IMR-90 (cell line): ENCODE measurements at regions of chr4 and their contacts with region 1.

Region 1: GRCh38 chr4:101347557-101348366 is 436 bp upstream of the PPP3CA start:
- DNase-seq: peak; percentile 95
- ATAC-seq: peak; percentile 90
- H3K4me3 ChIP-seq: peak overlapping the region; percentile 94
- H3K27ac ChIP-seq: peak overlapping the region; percentile 95
- H3K4me1 ChIP-seq: peaks cover 8% of the 10 kb centered on the region
- H3K27me3 ChIP-seq: no peaks in the 10 kb centered on the region
- CTCF ChIP-seq: 0 out of 2 replicates have a peak, but pooled peaks have one; percentile 3
- POLR2A ChIP-seq: peak; percentile 43; the same call in 1 of the 2 replicates
- RAD21 ChIP-seq: no peak

Region 2: GRCh38 chr4:99998062-99998867 is 1349.5 kb before region 1 on chr4:
- CTCF ChIA-PET with region 1: no interaction called
- POLR2A ChIA-PET with region 1: no interaction called
- dilution Hi-C with region 1: no loop called
- in situ Hi-C with region 1: no loop called
- intact Hi-C with region 1: loop called (anchors 10 kb)
- DNase-seq: peak; percentile 62
- ATAC-seq: peak; percentile 90
- H3K4me3 ChIP-seq: no peak overlapping the region
- H3K27ac ChIP-seq: no peak overlapping the region
- H3K4me1 ChIP-seq: no peaks in the 10 kb centered on the region
- H3K27me3 ChIP-seq: no peaks in the 10 kb centered on the region
- CTCF ChIP-seq: peak; percentile 58
- POLR2A ChIP-seq: no peak
- RAD21 ChIP-seq: peak; percentile 45

Region 3: DNA sequence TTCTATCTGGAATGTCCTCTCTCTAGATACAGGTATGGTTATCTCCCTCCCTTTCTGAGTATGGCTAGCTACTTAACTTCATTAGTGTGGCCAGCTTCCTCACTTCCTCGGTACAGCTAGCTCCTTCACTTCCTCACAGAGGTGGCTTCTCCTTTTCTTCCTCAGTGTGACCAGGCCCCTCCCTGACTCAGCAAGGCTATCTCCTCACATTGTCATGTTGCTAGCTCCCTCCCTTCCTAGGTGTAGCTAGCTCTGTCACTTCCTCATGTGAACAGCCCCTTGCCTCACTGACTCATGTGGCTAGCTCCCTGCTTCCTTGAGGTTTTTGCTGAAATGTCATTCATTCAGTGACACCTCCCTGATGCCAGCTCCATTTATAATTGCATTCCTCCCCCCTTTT is 1090.2 kb before region 1 on chr4:
- CTCF ChIA-PET with region 1: no interaction called
- POLR2A ChIA-PET with region 1: no interaction called
- dilution Hi-C with region 1: no loop called
- in situ Hi-C with region 1: no loop called
- intact Hi-C with region 1: no loop called
- DNase-seq: peak; percentile 3
- ATAC-seq: no peak
- H3K4me3 ChIP-seq: no peak overlapping the region
- H3K27ac ChIP-seq: no peak overlapping the region
- H3K4me1 ChIP-seq: no peaks in the 10 kb centered on the region
- H3K27me3 ChIP-seq: no peaks in the 10 kb centered on the region
- CTCF ChIP-seq: no peak
- POLR2A ChIP-seq: no peak
- RAD21 ChIP-seq: no peak

Region 4: GRCh38 chr4:101022151-101023024 is 325.4 kb before region 1 on chr4:
- CTCF ChIA-PET with region 1: no interaction called
- POLR2A ChIA-PET with region 1: no interaction called
- dilution Hi-C with region 1: no loop called
- in situ Hi-C with region 1: no loop called
- intact Hi-C with region 1: loop called (anchors 2 kb)
- DNase-seq: peak; percentile 39
- ATAC-seq: peak; percentile 64
- H3K4me3 ChIP-seq: no peak overlapping the region
- H3K27ac ChIP-seq: peak overlapping the region; percentile 48; the same call in 1 of the 2 replicates
- H3K4me1 ChIP-seq: peaks cover 17% of the 10 kb centered on the region
- H3K27me3 ChIP-seq: no peaks in the 10 kb centered on the region
- CTCF ChIP-seq: no peak
- POLR2A ChIP-seq: no peak
- RAD21 ChIP-seq: no peak

Region 5: DNA sequence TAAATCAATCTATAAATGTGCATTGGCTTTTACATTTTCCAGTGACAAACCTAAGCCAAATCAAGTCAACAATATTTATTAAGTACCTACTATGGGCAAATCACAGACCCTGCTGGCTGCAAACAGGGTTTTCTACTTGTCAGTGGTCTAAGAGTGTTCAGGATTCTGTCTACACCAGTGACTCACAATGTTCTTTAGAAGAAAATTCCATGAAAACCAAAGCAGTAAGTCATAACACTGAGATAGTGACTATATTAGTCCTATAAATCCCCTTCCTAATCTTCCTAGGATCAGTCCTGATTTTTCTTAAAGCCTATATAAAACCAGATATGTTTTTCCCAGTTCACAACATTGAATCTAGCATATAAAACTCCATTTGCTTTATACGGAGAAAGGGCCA is 70.1 kb before region 1 on chr4:
- CTCF ChIA-PET with region 1: no interaction called
- POLR2A ChIA-PET with region 1: no interaction called
- dilution Hi-C with region 1: no loop called
- in situ Hi-C with region 1: no loop called
- intact Hi-C with region 1: loop called (anchors 2 kb)
- DNase-seq: peak; percentile 81
- ATAC-seq: peak; percentile 82
- H3K4me3 ChIP-seq: no peak overlapping the region
- H3K27ac ChIP-seq: no peak overlapping the region
- H3K4me1 ChIP-seq: peaks cover 3% of the 10 kb centered on the region; the same call in 1 of the 2 replicates
- H3K27me3 ChIP-seq: no peaks in the 10 kb centered on the region
- CTCF ChIP-seq: no peak
- POLR2A ChIP-seq: no peak
- RAD21 ChIP-seq: no peak

Region 6: GRCh38 chr4:101288365-101289145 is 59.2 kb before region 1 on chr4:
- CTCF ChIA-PET with region 1: no interaction called
- POLR2A ChIA-PET with region 1: no interaction called
- dilution Hi-C with region 1: no loop called
- in situ Hi-C with region 1: no loop called
- intact Hi-C with region 1: no loop called
- DNase-seq: peak; percentile 32
- ATAC-seq: peak; percentile 27; the same call in 1 of the 2 replicates
- H3K4me3 ChIP-seq: no peak overlapping the region
- H3K27ac ChIP-seq: no peak overlapping the region
- H3K4me1 ChIP-seq: peaks cover 5% of the 10 kb centered on the region
- H3K27me3 ChIP-seq: no peaks in the 10 kb centered on the region
- CTCF ChIP-seq: no peak
- POLR2A ChIP-seq: no peak
- RAD21 ChIP-seq: no peak

Region 7: DNA sequence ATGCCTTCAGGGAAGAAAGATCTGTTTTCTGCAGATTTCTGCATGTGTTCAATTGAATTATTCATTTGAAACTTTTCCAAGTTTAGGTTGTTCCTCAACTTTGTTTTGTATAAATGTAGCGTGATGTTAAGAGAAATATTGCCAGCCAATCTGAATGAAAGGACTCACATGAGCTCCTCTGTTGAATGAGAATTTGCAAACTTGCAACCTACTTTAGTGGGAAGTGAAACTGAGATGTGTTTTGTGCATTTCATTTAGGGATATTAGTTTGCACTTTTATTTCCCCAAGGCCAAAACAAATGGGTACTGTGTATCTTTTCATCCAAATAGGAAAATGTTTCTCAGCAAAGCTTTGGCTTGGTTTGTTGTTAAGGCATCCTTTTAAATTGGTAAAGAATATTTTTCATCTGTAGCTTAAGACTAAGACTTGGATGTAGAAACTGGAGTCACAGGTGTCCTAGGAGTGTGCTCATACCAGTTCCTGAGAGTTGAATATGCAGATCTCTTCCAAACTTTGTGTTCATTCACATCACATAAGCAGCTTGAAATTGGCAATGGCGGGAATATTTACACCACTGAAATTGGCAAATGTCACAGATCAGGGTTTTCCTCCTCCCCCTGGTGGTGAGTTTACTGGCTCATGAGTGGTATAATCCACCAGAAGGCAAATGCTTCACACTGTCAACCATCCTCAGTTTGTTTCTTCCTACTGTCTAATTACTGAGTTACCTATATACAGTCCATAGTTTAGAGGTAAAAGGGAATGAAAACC is 249.2 kb after region 1 on chr4:
- CTCF ChIA-PET with region 1: no interaction called
- POLR2A ChIA-PET with region 1: no interaction called
- dilution Hi-C with region 1: no loop called
- in situ Hi-C with region 1: no loop called
- intact Hi-C with region 1: loop called (anchors 5 kb)
- DNase-seq: no peak
- ATAC-seq: no peak
- H3K4me3 ChIP-seq: no peak overlapping the region
- H3K27ac ChIP-seq: no peak overlapping the region
- H3K4me1 ChIP-seq: no peaks in the 10 kb centered on the region
- H3K27me3 ChIP-seq: no peaks in the 10 kb centered on the region
- CTCF ChIP-seq: peak; percentile 21; the same call in 1 of the 2 replicates
- POLR2A ChIP-seq: no peak
- RAD21 ChIP-seq: no peak

Region 8: GRCh38 chr4:101853028-101853427 is 505.3 kb after region 1 on chr4:
- CTCF ChIA-PET with region 1: no interaction called
- POLR2A ChIA-PET with region 1: no interaction called
- dilution Hi-C with region 1: no loop called
- in situ Hi-C with region 1: no loop called
- intact Hi-C with region 1: no loop called
- DNase-seq: no peak
- ATAC-seq: no peak
- H3K4me3 ChIP-seq: no peak overlapping the region
- H3K27ac ChIP-seq: no peak overlapping the region
- H3K4me1 ChIP-seq: no peaks in the 10 kb centered on the region
- H3K27me3 ChIP-seq: no peaks in the 10 kb centered on the region
- CTCF ChIP-seq: no peak
- POLR2A ChIP-seq: no peak
- RAD21 ChIP-seq: no peak

Region 9: DNA sequence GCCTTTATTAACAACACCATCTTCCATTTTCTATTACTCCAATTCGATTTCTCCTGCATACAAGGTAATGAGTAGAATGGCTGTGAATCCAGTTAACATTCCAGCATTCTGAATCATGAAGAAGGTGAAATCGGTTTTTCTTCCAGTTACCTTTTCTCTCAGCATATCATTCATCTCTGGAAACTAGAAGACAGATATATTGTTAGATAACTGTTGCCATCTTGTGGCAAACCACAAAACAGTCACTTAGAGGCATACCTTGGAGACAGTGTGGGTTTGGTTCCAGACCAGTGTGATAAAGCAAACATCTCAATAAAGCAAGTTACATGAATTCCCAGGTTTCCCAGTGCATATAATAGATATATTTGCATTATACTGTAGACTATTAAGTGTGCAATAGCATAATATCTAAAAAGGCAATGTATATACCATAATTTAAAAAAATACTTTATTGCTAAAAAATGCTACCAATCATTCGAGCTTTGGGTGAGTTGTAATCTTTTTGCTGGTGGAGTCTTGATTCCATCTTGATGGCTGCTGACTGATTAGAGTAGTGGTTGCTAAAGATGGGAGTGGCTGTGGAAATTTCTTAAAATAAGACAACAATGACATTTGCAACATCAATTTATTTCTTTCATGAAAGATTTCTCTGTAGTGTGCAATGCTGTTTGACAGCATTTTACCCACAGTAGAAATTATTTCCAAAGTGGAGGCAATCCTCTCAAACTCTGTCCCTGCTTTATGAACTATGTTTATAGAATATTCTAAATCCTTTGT is 915.4 kb after region 1 on chr4:
- CTCF ChIA-PET with region 1: no interaction called
- POLR2A ChIA-PET with region 1: no interaction called
- dilution Hi-C with region 1: no loop called
- in situ Hi-C with region 1: no loop called
- intact Hi-C with region 1: loop called (anchors 2 kb)
- DNase-seq: peak; percentile 28
- ATAC-seq: peak; percentile 79
- H3K4me3 ChIP-seq: no peak overlapping the region
- H3K27ac ChIP-seq: no peak overlapping the region
- H3K4me1 ChIP-seq: no peaks in the 10 kb centered on the region
- H3K27me3 ChIP-seq: no peaks in the 10 kb centered on the region
- CTCF ChIP-seq: peak; percentile 49
- POLR2A ChIP-seq: no peak
- RAD21 ChIP-seq: peak; percentile 61